ENCODE measurements at regions of chr17 and their contacts with region 1.

Region 1: DNA sequence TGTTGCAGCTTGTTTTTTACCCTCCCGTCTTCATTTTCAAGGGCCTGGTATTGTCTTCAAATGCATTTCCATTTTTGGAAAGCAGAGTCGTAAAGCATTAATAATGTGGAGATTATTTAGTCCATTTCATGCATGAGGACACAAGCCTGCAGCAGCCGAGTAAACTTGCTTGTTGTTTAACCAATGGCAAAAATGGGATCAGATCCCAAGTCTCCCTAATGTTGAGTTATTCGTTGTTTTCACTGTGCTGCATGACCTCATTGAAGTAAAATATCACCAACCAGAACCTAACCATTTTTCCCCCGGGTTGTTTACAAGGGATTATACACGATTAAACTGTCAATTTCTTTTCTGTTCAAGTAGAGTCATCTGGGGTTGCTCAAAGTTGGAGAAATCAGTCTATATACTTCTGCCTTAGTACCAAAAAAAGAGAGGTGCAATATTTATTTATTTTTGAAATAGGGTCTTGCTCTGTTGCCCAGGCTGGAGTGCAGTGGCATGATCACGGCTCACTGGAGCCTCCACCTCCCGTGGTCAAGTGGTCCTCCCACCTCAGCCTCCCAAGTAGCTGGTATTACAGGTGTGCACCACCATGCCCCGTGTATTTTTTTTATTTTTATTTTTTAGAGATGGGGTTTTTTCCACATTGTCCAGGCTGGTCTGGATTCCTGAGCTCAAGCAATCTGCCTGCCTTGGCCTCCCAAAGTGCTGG is 12.4 kb downstream of the AMZ2 start:
- DNase-seq: no peak
- CTCF ChIP-seq: no peak

Region 2: DNA sequence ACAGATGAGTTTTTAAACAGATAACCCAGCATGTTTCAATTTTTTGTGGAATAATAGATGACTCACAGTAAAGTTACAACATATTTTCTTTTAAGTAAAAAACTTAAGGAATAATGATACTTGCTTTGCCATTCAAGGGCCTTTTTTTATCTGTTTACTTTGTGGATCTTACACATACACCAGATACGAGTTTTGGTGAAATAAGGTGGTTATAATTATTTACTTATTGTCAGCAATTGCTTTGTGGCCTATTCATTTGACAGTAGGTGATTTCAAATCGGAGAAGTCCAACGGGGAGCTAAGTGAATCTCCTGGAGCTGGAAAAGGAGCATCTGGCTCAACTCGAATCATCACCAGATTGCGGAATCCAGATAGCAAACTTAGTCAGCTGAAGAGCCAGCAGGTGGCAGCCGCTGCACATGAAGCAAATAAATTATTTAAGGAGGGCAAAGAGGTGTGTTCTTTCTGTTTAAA is 368.6 kb before region 1 on chr17:
- in situ Hi-C with region 1: no loop called
- DNase-seq: no peak
- CTCF ChIP-seq: no peak

Region 3: GRCh38 chr17:68169828-68170227 is 90.4 kb before region 1 on chr17:
- in situ Hi-C with region 1: loop called (anchors 5 kb)
- DNase-seq: no peak
- CTCF ChIP-seq: no peak

Region 4: DNA sequence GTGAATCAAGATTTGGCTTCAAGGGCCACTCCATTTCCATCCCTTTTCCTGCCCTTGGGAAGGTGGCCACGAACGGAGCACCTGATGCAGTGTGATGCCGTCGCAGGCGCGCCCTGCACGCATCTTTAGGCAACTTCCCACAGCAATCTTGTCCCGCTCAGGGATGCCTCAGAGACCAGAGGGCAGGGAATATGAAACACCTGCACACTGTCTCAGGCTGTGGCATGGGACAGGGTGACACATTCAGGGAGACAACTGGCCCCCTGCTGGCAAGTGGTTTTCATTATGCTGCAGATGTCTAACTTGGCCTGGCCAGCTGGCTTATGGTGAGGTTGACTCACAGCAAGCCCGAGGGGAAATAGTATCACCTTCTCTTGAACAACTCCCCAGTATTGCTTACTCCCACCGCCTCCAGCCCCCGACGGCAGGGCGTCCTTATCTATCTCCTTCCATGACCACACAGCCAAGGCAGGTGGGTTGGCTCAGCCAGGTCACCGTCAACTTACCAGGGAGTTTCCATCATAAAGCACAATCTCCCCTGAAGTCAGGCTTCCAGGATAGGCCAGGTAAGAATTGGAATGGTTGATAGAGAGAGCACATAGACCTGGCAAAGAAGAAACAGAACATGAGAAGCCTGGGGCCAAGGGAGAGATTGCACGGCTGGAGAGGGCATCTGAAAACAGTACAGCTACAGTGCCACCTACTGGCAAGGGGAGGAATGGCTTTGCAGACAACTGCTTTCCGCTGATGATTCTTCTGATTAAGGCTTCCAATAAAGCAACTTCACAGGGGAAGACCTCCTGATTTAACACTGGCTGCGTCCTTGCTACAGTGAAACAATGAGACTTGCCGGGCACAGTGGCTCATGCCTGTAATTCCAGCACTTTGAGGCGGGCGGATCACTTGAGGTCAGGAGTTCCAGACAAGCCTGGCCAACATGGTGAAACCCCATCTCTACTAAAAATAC is 176.0 kb after region 1 on chr17:
- in situ Hi-C with region 1: loop called (anchors 10 kb)
- DNase-seq: peak; percentile 82
- CTCF ChIP-seq: peak; percentile 82

Measured in GM13976 (cell line).